Activated CD4-positive, alpha-beta T cell treated with anti-CD3 and anti-CD28 coated beads for 36 hours (primary cell): ENCODE measurements at regions of chr6 and their contacts with region 1.

Region 1: DNA sequence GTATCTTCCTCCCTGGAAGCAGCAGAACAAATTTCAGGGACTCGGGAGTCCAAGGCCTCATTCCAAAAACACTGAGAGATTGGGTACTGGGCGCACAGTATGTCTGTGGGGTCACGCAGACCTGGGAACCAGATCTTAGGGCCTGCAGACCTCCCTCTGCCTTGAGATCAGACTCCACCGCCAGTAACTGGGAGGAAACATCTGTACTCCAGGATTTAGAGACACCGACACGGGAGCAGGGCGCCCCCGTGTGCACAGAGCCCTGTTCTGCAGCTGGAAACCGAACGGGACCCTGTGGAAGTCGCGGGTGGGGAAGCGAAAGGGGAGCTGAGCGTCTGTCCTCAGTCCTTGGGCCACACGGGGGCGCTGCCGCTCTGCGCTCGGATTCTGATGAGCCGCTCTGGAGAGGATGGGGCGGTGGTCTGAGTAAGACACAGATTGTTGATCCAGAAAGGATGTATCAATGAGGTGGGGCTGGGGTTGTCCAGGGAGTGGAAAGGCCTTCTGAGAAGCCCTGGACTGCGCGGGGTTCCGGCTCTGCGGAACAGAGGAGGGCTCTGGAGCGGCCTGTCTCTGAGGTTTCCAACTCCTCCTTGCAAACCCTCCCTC is 35.7 kb upstream of the HLA-E start:
- DNase-seq: peak; percentile 93
- ATAC-seq: peak; percentile 85
- H3K4me3 Mint-ChIP-seq: peak overlapping the region; percentile 55
- H3K27ac Mint-ChIP-seq: no peak overlapping the region
- H3K4me1 Mint-ChIP-seq: peaks cover 37% of the 10 kb centered on the region
- H3K27me3 Mint-ChIP-seq: peaks cover 83% of the 10 kb centered on the region

Region 2: DNA sequence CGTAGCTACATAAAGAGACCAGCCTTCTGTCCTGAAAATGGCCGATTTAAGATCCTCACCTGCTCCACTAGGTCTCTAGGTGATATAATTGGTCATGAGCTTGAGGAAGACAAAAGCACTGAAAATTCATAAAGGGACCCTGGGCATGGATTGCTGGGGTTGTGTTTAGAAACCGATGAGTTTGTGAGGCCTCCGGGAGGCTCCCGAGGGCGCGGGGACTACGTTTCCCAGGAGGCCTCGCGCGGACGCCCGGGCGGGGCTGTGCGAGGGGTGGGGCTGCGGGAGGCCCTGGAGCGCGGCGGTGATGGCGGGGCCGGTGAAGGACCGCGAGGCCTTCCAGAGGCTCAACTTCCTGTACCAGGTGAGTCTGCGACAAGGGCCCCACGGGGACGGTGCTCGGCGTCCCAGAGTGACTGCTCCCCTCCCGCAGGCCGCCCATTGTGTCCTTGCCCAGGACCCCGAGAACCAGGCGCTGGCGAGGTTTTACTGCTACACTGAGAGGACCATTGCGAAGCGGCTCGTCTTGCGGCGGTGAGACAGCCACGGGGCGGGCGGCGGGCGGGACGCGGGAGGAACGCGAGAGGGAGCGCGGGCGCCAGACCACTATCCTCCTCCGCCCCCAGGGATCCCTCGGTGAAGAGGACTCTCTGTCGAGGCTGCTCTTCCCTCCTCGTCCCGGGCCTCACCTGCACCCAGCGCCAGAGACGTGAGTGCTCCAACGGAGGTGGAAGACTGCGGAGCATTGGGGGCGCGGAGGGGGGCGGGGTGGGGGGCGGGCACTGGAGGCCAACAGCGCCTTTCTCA is 108.5 kb before region 1 on chr6 and contains the start of gene RPP21:
- CTCF ChIA-PET with region 1: no interaction called
- POLR2A ChIA-PET with region 1: no interaction called
- intact Hi-C with region 1: loop called in 1 of 2 experiments (anchors 5 kb)
- DNase-seq: peak; percentile 94
- ATAC-seq: peak; percentile 96
- H3K4me3 Mint-ChIP-seq: peak within 1 kb of the TSS; percentile 85
- H3K27ac Mint-ChIP-seq: peak within 1 kb of the TSS; percentile 84
- H3K4me1 Mint-ChIP-seq: peaks cover 41% of the 10 kb centered on the region
- H3K27me3 Mint-ChIP-seq: peaks cover 2% of the 10 kb centered on the region
- total RNA-seq, gene RPP21: 32.6 to 38.1 TPM

Region 3: GRCh38 chr6:30357678-30358540 is 95.7 kb before region 1 on chr6:
- CTCF ChIA-PET with region 1: interaction called, 3 read pairs
- POLR2A ChIA-PET with region 1: no interaction called
- intact Hi-C with region 1: loop called in 1 of 2 experiments (anchors 1 kb)
- DNase-seq: peak; percentile 68
- ATAC-seq: peak; percentile 81
- H3K4me3 Mint-ChIP-seq: peak overlapping the region; percentile 73
- H3K27ac Mint-ChIP-seq: no peak overlapping the region
- H3K4me1 Mint-ChIP-seq: peaks cover 6% of the 10 kb centered on the region
- H3K27me3 Mint-ChIP-seq: peaks cover 51% of the 10 kb centered on the region

Region 4: GRCh38 chr6:30411515-30412207 is 42.0 kb before region 1 on chr6:
- CTCF ChIA-PET with region 1: interaction called, 9 read pairs
- POLR2A ChIA-PET with region 1: no interaction called
- intact Hi-C with region 1: loop called (anchors 1 to 5 kb)
- DNase-seq: peak; percentile 79
- ATAC-seq: peak; percentile 76
- H3K4me3 Mint-ChIP-seq: no peak overlapping the region
- H3K27ac Mint-ChIP-seq: no peak overlapping the region
- H3K4me1 Mint-ChIP-seq: peaks cover 6% of the 10 kb centered on the region
- H3K27me3 Mint-ChIP-seq: peaks cover 29% of the 10 kb centered on the region

Region 5: DNA sequence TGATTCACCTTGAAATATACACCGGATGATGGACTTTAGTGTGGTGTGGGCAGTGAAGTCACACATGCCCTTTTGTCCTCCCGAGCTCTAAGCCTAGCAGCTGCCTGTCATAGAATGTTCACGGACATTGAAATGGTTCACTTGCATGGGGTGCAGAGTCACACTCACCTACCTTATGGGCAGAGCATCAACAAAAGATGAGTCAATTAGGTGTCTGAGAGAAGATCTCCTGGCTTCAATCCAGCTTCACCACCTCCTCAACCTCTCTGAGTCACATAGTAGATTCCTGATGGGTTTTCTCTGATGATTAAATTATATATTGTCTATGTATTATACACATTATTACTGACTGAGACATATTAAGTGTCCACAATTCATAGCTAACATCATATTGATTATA is 12.4 kb before region 1 on chr6:
- CTCF ChIA-PET with region 1: interaction called, 12 read pairs
- POLR2A ChIA-PET with region 1: no interaction called
- intact Hi-C with region 1: no loop called
- DNase-seq: peak; percentile 31
- ATAC-seq: peak; percentile 74
- H3K4me3 Mint-ChIP-seq: no peak overlapping the region
- H3K27ac Mint-ChIP-seq: no peak overlapping the region
- H3K4me1 Mint-ChIP-seq: peaks cover 12% of the 10 kb centered on the region
- H3K27me3 Mint-ChIP-seq: peaks cover 69% of the 10 kb centered on the region

Region 6: GRCh38 chr6:30463651-30464618 is 10.3 kb after region 1 on chr6:
- CTCF ChIA-PET with region 1: interaction called, 35 read pairs
- POLR2A ChIA-PET with region 1: interaction called, 8 read pairs
- intact Hi-C with region 1: loop called in 1 of 2 experiments (anchors 1 kb)
- DNase-seq: peak; percentile 79
- ATAC-seq: peak; percentile 48
- H3K4me3 Mint-ChIP-seq: no peak overlapping the region
- H3K27ac Mint-ChIP-seq: no peak overlapping the region
- H3K4me1 Mint-ChIP-seq: peaks cover 26% of the 10 kb centered on the region
- H3K27me3 Mint-ChIP-seq: peaks cover 79% of the 10 kb centered on the region